GM12878 (cell line): ENCODE measurements at regions of chr11 and their contacts with region 1.

Region 1: DNA sequence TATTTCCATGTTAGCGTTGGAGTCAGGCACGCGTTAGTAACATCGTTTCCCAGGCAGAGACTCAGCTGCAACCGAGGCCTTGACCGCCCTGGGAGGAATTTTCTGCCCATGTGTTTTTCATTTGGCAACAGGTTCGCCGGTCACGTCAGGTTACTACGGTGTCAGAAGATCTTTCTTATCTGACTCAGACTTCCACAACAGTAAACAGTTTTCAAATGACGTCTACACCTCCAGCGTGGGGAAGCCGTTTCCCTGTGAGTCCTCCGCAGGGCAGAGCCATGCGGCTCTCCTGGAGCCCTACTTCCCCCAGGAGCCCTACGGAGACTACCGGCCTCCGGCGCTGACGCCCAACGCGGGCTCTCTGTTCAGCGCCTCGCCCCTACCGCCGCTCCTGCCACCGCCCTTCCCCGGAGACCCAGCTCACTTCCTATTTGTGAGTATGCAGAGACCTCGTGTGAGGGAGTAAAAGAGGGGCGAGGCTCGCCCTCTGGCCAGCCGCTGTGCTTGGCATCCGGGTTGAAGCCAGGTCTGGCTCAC is 14.3 kb upstream of the POU2AF3 start:
- DNase-seq: no peak
- ATAC-seq: peak; percentile 30; the same call in 2 of the 3 replicates
- H3K4me3 ChIP-seq: no peak overlapping the region
- H3K27ac ChIP-seq: no peak overlapping the region
- H3K4me1 ChIP-seq: no peaks in the 10 kb centered on the region
- H3K27me3 ChIP-seq: peaks cover 0 to 3% of the 10 kb centered on the region in 2 experiments; a peak in 2 of 4 replicates
- CTCF ChIP-seq: no peak
- EP300 ChIP-seq: no peak
- POLR2A ChIP-seq: no peak
- RAD21 ChIP-seq: no peak

Region 2: DNA sequence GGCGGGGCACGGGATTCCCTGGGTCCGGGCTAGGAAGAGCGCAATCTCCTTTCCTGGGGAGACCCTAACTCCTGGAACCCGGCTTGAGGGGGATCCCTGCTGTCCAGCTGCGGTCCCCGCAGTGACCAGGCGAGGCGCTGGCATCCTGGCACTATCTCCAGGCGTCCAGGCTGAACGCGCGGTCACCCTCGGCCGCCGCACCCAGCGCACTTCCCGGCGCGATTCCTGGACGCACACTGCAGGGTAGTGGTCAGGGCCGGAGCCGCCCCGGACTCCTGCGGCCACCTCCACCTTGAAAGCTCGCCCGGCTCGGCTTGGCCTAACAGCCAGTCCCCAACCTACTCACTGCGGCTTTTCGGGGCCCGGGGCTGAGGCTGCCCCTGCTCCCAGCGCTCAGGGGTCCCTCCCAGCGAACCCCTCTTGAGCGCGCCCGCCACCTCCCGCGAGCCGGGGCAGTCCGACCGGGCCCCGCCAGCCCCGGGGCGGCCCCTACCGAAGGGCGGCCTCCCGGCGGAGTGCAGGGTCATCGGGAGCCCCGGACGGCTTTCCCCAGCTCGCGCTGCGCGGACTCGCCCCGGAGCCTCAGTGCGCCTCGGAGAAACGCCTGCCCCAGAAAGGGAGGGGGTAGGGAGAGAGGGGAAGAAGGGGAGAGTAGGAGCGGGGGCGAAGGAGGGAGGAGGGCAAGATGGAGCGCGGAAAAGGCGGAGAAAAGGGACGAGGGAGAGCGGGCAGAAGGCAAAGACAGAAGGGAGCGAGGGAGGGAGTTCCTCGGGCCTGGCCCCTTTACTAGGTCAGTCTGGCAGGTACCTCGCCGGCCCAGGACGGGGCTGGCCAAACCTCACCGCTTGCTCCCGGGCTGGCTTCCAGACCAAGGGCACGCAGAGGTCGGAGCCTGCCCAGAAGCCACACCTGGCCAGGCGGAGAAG is 15.4 kb after region 1 on chr11:
- CTCF ChIA-PET with region 1: interaction called, 16 read pairs
- POLR2A ChIA-PET with region 1: no interaction called
- RAD21 ChIA-PET with region 1: interaction called, 6 read pairs
- SMC1A ChIA-PET with region 1: interaction called, 3 read pairs
- in situ Hi-C with region 1: no loop called
- intact Hi-C with region 1: no loop called
- DNase-seq: no peak
- ATAC-seq: peak; percentile 88
- H3K4me3 ChIP-seq: peak overlapping the region; percentile 71
- H3K27ac ChIP-seq: no peak overlapping the region
- H3K4me1 ChIP-seq: no peaks in the 10 kb centered on the region
- H3K27me3 ChIP-seq: peaks cover 0 to 7% of the 10 kb centered on the region in 2 experiments; a peak in 3 of 4 replicates
- CTCF ChIP-seq: peak; percentile 32 to 65 (median 44); a peak in 5 of 6 replicates
- EP300 ChIP-seq: no peak
- POLR2A ChIP-seq: no peak
- RAD21 ChIP-seq: peak; percentile 36; the same call in 1 of the 2 replicates

Region 3: GRCh38 chr11:111378861-111379601 is 95.0 kb after region 1 on chr11 and contains the start of gene POU2AF1:
- CTCF ChIA-PET with region 1: interaction called, 5 read pairs
- POLR2A ChIA-PET with region 1: no interaction called
- RAD21 ChIA-PET with region 1: interaction called, 3 read pairs
- SMC1A ChIA-PET with region 1: interaction called, 6 read pairs
- in situ Hi-C with region 1: no loop called
- intact Hi-C with region 1: loop called (anchors 1 kb)
- DNase-seq: peak; percentile 82
- ATAC-seq: peak; percentile 76
- H3K4me3 ChIP-seq: peak within 1 kb of the TSS; percentile 69
- H3K27ac ChIP-seq: peak within 1 kb of the TSS; percentile 97
- H3K4me1 ChIP-seq: peaks cover 17% of the 10 kb centered on the region
- H3K27me3 ChIP-seq: no peaks in the 10 kb centered on the region
- CTCF ChIP-seq: no peak
- EP300 ChIP-seq: no peak; a peak in 1 of 4 replicates
- POLR2A ChIP-seq: peak; percentile 96
- RAD21 ChIP-seq: no peak
- polyA plus RNA-seq, gene POU2AF1: 13.1 to 92.7 TPM

Region 4: GRCh38 chr11:111435046-111435698 is 151.2 kb after region 1 on chr11:
- CTCF ChIA-PET with region 1: interaction called, 680 read pairs
- POLR2A ChIA-PET with region 1: no interaction called
- RAD21 ChIA-PET with region 1: interaction called, 322 read pairs
- SMC1A ChIA-PET with region 1: interaction called, 455 read pairs
- in situ Hi-C with region 1: no loop called
- intact Hi-C with region 1: no loop called
- DNase-seq: no peak
- ATAC-seq: no peak
- H3K4me3 ChIP-seq: no peak overlapping the region
- H3K27ac ChIP-seq: no peak overlapping the region
- H3K4me1 ChIP-seq: no peaks in the 10 kb centered on the region; the same call in 1 of the 2 replicates
- H3K27me3 ChIP-seq: no peaks in the 10 kb centered on the region; a peak in 1 of 4 replicates
- CTCF ChIP-seq: no peak
- EP300 ChIP-seq: no peak
- POLR2A ChIP-seq: no peak
- RAD21 ChIP-seq: no peak

Region 5: GRCh38 chr11:111446404-111447111 is 162.5 kb after region 1 on chr11:
- CTCF ChIA-PET with region 1: interaction called, 64 read pairs
- POLR2A ChIA-PET with region 1: no interaction called
- RAD21 ChIA-PET with region 1: interaction called, 45 read pairs
- SMC1A ChIA-PET with region 1: interaction called, 47 read pairs
- in situ Hi-C with region 1: no loop called
- intact Hi-C with region 1: loop called (anchors 1 kb)
- DNase-seq: peak; percentile 76
- ATAC-seq: peak; percentile 98
- H3K4me3 ChIP-seq: no peak overlapping the region
- H3K27ac ChIP-seq: no peak overlapping the region
- H3K4me1 ChIP-seq: peaks cover 9% of the 10 kb centered on the region
- H3K27me3 ChIP-seq: no peaks in the 10 kb centered on the region
- CTCF ChIP-seq: peak; percentile 91 to 96 (median 94)
- EP300 ChIP-seq: no peak
- POLR2A ChIP-seq: no peak
- RAD21 ChIP-seq: peak; percentile 100